Activated CD4-positive, alpha-beta memory T cell treated with anti-CD3 and anti-CD28 coated beads, Interleukin-2, amount 10 ng/mL, durations not matched to agents 7 days and 5 days (primary cell): ENCODE measurements at regions of chr9 and their contacts with region 1.

Region 1: DNA sequence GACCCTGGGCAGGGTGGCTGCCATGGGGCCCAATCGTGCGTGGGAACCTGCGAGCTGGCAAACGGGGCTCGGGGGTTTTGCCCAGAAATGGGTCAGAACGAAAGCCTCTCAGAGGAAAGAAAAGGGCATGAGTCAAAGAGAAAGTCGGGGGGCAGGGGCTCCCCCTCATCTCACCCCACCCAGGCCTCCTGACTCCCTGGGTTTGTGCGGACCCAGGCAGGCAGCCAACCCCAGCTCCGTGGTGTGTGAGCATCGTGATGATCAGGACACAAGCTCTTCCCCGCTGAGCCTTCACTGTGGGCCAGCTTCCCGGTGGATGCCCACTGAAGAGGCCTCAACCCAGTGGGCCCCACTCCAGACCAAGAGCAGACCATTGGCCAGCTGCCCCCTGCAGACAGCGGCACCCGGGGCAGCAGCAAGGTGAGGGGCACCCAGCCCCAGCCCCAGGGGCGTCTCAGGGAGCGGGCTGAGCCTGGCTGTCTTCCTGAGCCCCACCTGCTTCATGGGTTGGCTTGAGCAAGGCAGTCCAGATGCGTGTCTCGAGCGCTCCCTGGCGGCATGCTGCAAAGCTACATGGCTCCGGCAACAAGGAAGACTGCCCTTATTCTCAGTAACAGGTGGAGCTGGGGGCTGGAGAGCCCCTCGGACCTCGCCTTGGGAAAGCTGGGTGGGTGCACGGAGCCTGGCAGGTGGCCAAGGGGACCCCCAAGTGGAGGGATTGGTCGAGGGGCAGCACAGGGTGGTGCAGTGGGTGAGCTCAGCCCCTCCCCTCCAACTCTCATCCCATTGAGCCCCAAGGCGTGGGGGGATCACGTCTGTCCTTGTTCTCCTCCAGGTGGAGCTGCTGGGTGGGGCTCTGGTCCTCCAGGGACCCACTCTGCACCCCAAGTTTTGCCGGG is 3.2 kb upstream of the FUT7 start:
- DNase-seq: peak; percentile 90
- H3K4me3 Mint-ChIP-seq: peak overlapping the region; percentile 64
- H3K27ac Mint-ChIP-seq: peak overlapping the region; percentile 98
- H3K4me1 Mint-ChIP-seq: peaks cover 48% of the 10 kb centered on the region
- H3K27me3 Mint-ChIP-seq: no peaks in the 10 kb centered on the region

Region 2: GRCh38 chr9:136807281-136808074 is 227.6 kb before region 1 on chr9 and contains the start of gene RABL6:
- CTCF ChIA-PET with region 1: interaction called, 13 read pairs
- POLR2A ChIA-PET with region 1: interaction called, 11 read pairs
- DNase-seq: peak; percentile 84
- H3K4me3 Mint-ChIP-seq: peak within 1 kb of the TSS; percentile 87
- H3K27ac Mint-ChIP-seq: peak within 1 kb of the TSS; percentile 76
- H3K4me1 Mint-ChIP-seq: peaks cover 37% of the 10 kb centered on the region
- H3K27me3 Mint-ChIP-seq: peaks cover under 1% of the 10 kb centered on the region
- total RNA-seq, gene RABL6: 96.0 to 96.2 TPM

Region 3: DNA sequence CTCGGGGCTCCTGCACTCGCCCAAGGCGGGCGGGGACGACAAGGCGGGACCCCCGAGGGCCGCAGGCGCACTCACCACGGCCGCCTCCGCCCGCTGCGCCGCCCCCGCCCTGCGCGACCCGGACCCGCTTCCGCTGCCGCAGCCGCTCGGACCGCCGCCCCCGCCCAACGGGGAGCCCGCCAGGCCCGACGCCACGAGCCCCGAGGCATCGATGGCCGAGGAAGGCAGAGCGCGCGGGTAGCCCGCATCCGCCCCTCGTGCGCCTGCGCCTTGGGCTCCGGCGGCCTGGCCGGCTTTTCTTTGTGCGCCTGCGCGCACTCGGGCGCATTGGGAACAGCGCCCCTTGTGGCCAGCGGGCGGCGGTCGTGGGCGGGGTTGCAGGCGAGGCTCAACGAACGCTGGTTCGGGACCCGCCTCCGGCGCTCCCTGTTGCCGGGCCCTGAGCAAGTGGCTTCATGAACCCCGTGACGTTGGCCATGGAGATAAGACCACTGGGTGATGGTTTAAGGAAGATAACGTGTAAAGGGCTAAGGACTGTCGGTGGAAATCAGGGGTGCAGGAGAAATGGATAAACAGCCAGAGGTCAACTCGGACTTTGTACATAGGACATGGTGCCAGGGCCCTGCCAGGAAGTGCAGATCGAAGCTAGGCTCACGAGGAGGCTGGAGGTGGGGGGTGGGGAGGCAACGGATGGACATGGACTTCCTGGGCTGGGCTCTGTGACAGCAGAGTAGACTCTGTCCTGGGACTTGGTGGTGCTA is 90.4 kb before region 1 on chr9 and contains the starts of genes C8G and FBXW5:
- CTCF ChIA-PET with region 1: interaction called, 149 read pairs
- POLR2A ChIA-PET with region 1: interaction called, 11 read pairs
- DNase-seq: peak; percentile 96
- H3K4me3 Mint-ChIP-seq: peak within 1 kb of the TSS; percentile 80
- H3K27ac Mint-ChIP-seq: peak within 1 kb of the TSS; percentile 77
- H3K4me1 Mint-ChIP-seq: peaks cover 25% of the 10 kb centered on the region
- H3K27me3 Mint-ChIP-seq: no peaks in the 10 kb centered on the region
- total RNA-seq, gene C8G: 1.5 to 3.2 TPM
- total RNA-seq, gene FBXW5: 118 to 119 TPM

Region 4: DNA sequence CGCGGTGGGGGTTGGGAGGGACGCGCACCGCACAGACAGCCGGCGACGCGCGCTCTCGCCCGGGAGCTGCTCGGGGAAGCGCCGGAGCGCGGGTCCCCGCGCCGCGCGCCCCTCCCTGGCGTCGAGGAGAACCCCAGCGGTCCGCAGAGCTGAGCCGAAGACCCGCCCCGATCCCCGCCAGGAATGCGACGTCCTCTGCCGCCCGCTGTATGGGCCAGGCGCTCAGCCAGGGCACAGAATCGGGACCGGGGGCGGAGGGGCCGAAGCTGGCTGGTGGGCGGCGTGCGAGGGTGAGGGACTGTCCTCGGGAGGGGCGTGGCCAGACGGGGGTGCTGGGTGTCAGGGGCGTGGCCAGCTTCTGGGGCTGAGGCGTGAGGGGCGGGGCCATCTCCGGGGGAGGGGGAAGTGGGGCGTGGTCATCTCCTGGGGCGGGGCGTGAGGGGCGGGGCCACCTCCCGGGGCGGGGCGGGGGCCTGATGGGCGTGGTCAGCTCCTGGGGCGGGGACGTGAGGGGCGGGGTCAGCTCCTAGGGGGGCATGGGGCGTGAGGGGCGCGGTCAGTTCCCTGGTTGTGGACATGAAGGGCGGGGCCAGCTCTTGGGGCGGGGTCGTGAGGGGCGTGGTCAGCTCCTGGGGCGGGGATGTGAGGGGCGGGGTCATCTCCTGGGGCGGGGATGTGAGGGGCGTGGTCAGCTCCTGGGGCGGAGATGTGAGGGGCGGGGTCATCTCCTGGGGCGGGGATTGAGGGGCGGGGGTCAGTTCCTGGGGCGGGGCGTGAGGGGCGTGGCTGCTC is 56.8 kb before region 1 on chr9:
- CTCF ChIA-PET with region 1: interaction called, 26 read pairs
- POLR2A ChIA-PET with region 1: interaction called, 13 read pairs
- DNase-seq: peak; percentile 83
- H3K4me3 Mint-ChIP-seq: no peak overlapping the region
- H3K27ac Mint-ChIP-seq: no peak overlapping the region
- H3K4me1 Mint-ChIP-seq: peaks cover 33% of the 10 kb centered on the region
- H3K27me3 Mint-ChIP-seq: peaks cover 1% of the 10 kb centered on the region

Region 5: GRCh38 chr9:137000177-137000883 is 34.8 kb before region 1 on chr9:
- CTCF ChIA-PET with region 1: interaction called, 26 read pairs
- POLR2A ChIA-PET with region 1: interaction called, 6 read pairs
- DNase-seq: peak; percentile 43
- H3K4me3 Mint-ChIP-seq: peak overlapping the region; percentile 29
- H3K27ac Mint-ChIP-seq: peak overlapping the region; percentile 72
- H3K4me1 Mint-ChIP-seq: peaks cover 49% of the 10 kb centered on the region
- H3K27me3 Mint-ChIP-seq: peaks cover 7% of the 10 kb centered on the region

Region 6: DNA sequence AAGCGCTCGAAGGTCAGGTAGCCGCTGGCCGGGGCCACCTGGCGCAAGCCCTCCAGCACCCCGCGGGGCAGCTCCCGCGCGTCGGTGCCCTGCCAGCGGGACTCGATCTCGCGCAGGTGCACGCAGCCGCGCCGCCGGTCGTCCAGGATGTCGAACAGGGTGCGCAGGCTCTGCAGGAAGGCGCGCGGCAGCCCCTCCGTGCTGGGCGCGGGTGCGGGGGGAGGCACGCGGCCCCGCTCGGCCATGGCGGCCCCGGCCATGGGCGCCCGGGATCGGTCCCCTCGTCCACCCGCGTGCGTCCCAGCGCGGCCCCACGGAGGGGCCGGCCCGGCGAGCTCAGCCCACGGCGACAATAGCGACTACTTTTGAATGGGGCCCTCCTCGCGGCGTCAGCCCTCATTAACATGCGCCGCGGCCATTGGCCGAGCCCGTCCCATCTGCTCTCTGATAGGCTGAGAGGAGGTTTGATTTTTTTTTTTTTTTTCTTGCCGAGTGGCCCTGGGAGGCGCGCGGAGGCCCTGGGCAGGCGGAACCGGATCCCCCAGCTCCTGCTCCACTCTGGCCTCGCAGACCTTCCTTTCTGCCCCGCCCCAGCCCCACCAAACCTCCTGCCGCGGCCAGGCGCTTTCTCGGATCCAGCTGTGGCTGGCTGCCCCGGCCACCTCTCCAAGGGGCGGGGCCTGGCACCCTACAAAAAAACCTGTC is 35.2 kb after region 1 on chr9 and contains the start of gene SAPCD2:
- CTCF ChIA-PET with region 1: interaction called, 105 read pairs
- POLR2A ChIA-PET with region 1: interaction called, 10 read pairs
- DNase-seq: peak; percentile 90
- H3K4me3 Mint-ChIP-seq: peak within 1 kb of the TSS; percentile 73
- H3K27ac Mint-ChIP-seq: peak within 1 kb of the TSS; percentile 63
- H3K4me1 Mint-ChIP-seq: peaks cover 37% of the 10 kb centered on the region
- H3K27me3 Mint-ChIP-seq: no peaks in the 10 kb centered on the region
- total RNA-seq, gene SAPCD2: 26.8 to 27.0 TPM

Region 7: DNA sequence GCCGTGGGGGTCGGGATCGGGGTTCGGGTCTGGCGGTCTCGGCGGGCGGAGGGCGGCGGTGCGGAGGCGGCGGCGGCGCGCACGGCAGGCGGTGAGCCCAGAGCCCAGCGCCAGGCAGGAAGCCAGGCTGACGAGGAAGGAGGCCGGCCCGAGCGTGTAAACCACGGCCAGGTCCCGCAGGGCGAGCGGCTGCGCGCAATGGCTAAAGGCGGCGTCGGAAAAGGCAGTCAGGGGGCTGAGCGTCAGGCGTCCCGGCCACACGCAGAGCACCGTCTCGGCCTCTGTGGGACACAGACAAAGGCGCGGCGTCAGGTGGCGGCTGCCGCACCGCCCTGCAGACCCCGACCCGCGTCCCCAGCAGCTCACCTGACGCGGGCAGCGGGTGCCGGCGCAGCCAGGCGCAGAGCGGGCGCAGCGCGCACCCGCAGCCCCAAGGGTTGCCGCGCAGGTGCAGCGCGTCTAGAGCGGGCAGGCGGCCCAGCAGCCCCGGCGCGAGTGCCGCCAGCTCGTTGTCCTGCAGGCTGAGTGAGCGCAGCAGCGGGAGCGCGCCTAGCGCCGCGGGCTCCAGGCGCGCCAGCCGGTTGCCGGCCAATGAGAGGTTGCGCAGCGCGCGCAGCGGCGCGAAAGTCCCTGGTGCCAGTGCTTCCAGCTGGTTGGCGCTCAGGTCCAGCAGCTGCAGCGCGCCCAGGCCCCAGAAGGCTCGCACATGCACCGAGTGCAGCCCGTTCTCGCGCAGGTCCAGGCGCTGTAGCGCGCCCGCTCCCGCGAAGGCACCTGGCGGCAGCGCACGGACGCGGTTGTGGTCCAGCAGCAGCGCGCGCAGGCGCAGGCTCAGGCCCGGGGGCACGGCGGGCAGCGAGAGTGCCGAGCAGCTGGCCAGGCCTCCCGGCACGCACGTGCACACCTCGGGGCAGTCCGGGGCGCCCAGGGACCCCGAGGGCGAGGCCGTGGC is 134.1 kb after region 1 on chr9:
- CTCF ChIA-PET with region 1: no interaction called
- POLR2A ChIA-PET with region 1: no interaction called
- DNase-seq: no peak
- H3K4me3 Mint-ChIP-seq: peak overlapping the region; percentile 56
- H3K27ac Mint-ChIP-seq: no peak overlapping the region
- H3K4me1 Mint-ChIP-seq: peaks cover 3% of the 10 kb centered on the region
- H3K27me3 Mint-ChIP-seq: peaks cover 45% of the 10 kb centered on the region